ENCODE measurements at regions of chr3 and their contacts with region 1.

Region 1: DNA sequence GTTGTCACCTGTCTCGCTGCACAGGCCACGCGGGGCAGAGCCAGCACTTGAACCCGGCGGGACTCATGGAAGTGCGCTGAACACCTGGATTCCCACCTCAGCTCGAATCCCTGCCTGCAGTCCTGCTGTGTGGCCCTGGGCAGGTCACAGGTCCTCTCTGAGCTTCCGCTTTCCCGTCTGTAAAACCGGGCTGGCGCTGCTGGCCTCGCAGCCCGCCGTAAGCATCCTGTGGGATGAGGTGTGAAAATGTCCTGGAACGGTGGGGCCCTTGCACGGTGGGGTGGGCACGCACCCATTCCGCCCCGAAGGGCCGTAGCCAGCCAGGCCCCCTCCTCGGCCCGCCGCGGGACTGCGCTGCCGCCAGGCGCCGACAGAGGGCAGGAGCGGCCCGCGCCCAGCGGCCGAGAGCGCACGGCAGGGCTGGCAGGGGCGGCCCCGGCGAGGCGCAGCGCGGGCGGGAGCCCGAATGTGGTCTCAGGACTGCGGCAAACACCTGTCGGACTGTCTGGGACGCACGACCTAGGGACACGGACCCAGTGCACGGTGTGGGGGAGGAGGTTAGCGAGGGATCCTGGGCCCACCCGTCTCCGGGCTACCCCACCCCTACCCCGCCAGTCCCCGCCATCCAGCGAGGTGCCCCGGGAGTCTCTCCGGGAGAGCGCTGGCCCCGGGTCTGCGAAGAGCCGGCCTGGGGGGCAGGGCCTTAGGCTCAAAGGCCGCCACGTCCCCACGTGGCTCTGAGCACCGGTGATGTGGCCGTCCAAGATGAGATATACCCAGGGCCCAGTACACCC is 40.4 kb downstream of the DNAJB8 start:
- DNase-seq: peak; percentile 54 to 90 (median 71)
- ATAC-seq: peak; percentile 95 to 98 (median 98)
- H3K4me3 ChIP-seq: peak overlapping the region in 3 of 4 donors; percentile 8 to 37 (median 13)
- H3K27ac ChIP-seq: no peak overlapping the region
- H3K4me1 ChIP-seq: peaks cover 0 to 8% (median 0%) of the 10 kb centered on the region in 3 donors
- H3K27me3 ChIP-seq: no peaks in the 10 kb centered on the region
- CTCF ChIP-seq: peak; percentile 74 to 86 (median 83)

Region 2: DNA sequence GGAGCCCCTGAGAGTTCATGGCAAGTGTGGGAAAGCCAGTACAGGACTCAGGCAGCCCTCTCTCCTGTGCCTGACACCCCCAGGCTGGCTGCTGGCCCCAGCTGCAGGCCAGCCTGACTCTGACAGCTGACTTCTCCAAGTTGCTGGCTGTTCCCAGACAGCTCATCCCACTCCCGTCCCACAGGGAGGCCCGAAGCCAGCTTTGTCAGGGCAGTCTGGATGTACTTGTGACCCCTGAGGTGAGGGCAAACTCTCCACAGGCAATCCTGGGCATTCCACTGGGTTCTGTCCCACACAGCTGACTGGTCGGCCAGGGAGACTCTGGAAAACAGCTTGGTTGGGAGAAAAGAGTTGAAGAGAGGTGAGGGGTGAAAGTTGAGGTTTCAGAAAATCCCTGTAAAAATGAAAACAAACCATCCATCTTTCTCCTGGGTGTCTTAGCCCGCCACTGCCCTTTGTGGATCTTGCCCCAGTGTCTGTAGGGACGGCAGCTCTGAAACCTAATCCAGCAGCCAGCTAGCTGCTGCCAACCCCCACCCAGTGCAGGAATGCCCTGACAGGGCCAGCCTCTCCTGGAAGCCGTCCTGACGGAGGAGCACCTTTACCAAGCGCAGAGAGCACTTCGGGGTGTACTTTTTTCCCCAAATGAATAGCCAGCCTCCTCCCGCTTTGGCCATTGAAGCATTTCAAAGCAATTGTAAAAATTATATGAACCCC is 47.5 kb before region 1 on chr3:
- intact Hi-C with region 1: no loop called
- DNase-seq: peak in 1 of 6 donors; percentile 44
- ATAC-seq: no peak
- H3K4me3 ChIP-seq: no peak overlapping the region
- H3K27ac ChIP-seq: no peak overlapping the region
- H3K4me1 ChIP-seq: peaks cover 19 to 21% (median 21%) of the 10 kb centered on the region in 3 donors
- H3K27me3 ChIP-seq: no peaks in the 10 kb centered on the region
- CTCF ChIP-seq: no peak

Region 3: GRCh38 chr3:128497387-128498126 is 71.2 kb after region 1 on chr3:
- intact Hi-C with region 1: loop called in 1 of 3 experiments (anchors 5 kb)
- DNase-seq: peak; percentile 71 to 90 (median 78)
- ATAC-seq: peak; percentile 59 to 83 (median 74)
- H3K4me3 ChIP-seq: peak overlapping the region; percentile 18 to 51 (median 34)
- H3K27ac ChIP-seq: no peak overlapping the region
- H3K4me1 ChIP-seq: peaks cover 0 to 3% (median 0%) of the 10 kb centered on the region in 3 donors
- H3K27me3 ChIP-seq: no peaks in the 10 kb centered on the region
- CTCF ChIP-seq: peak; percentile 31 to 69 (median 46)